Dendritic cell treated with granulocyte-macrophage colony-stimulating factor and Interleukin-4, amounts not matched to agents 40 ng/mL and 50 ng/mL, for 4 days (primary cell): ENCODE measurements at regions of chr5 and their contacts with region 1.

Region 1: DNA sequence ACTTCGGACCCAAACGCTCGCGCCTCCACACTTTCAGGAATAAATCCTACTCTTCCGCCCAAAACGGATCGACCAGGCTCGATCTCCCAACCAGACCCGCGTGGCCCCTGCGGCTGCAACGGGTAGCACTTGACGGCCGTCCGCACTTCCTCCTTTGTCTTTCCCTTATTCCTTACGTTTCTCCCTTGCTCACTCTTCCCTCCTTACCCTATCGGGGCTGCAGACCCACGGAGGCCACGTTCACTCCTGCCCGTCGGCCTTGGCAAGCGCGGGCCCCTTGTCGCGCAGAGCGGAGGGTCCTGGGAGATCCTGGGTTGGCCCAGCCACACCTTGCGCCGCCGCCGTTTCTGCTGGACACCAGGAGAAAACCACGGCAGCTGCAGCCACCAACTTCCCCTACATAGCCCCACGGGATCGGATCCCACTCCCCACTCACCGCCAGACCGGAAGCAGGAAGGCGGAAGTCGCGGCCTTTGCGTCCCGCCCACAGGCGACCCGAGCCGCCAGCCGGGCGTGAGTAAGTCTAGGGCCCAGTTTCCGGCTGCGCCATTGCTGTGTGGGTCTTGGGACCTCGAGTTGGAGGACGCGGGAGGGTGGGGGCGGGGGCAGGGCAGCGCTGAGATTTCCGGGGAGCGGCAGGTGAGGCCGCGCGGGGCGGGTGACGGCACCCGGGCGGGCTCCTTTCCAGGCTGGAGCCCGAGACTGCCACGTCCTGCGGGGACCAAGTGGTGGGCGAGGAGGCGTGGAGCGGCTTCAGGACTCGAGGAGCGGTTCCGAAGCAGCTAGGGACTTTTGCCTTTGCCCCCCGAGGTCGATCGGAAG is at the start of gene SMIM15:
- H3K4me3 Mint-ChIP-seq: peak within 1 kb of the TSS; percentile 84
- H3K27ac Mint-ChIP-seq: peak within 1 kb of the TSS; percentile 97
- H3K4me1 Mint-ChIP-seq: peaks cover 45% of the 10 kb centered on the region
- H3K27me3 Mint-ChIP-seq: no peaks in the 10 kb centered on the region

Region 2: DNA sequence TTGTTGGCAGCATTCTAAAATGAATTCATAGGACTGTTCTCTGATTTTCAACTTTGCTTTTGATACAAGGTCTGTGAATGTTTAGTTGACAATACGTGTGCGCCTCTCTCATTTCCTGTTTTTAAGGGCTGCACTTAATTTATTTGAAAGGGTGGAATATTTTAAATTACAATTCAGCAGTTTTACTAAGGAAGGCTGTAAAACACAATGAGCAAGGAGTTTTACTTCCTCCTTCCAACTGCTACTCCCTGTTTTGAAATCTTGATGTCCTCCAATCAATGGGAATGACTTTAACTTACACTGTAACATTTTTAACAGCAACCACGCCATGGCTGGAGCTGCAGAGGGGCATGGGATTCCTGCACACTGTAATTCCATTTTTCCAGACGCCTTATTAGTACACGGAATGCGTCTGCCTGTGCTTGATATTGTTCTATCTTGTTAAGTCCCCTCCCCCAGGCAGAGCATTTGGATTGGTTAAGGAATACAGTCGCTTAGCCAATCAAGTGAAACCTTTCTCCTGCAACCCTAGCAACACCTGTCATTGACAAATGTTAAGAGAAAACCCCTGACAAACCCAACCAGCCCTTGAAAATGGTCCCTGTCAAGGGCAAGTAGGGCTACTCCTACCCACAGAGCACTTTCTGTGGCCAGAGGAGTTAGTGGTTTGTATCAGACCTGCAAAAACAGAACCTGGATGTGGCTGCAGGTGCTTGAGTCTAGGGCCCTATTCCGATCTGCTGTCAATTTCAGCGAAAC is 157.3 kb after region 1 on chr5:
- intact Hi-C with region 1: loop called (anchors 1 kb)
- H3K4me3 Mint-ChIP-seq: peak overlapping the region; percentile 30
- H3K27ac Mint-ChIP-seq: peak overlapping the region; percentile 87
- H3K4me1 Mint-ChIP-seq: peaks cover 76% of the 10 kb centered on the region
- H3K27me3 Mint-ChIP-seq: no peaks in the 10 kb centered on the region

Region 3: DNA sequence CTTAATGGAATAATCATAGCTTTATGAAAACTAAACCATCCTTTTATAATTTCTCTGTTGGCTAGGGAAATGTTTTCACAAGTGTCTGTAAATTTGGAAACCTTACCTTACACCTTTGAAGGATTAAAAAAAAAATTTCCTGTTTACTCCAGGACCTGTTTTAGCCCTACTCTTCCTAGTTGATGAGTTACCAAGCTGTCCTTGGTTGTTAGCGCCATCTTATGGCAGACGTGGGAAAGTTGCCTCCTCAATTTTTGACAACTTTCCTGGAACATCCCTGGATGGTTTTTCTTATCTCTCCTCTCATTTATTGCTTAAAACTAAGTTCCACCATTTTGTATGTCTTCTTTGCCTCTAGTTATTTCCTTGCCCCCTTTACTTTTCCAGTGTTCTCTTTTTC is 195.5 kb after region 1 on chr5:
- intact Hi-C with region 1: no loop called
- H3K4me3 Mint-ChIP-seq: no peak overlapping the region
- H3K27ac Mint-ChIP-seq: no peak overlapping the region
- H3K4me1 Mint-ChIP-seq: peaks cover 40% of the 10 kb centered on the region
- H3K27me3 Mint-ChIP-seq: no peaks in the 10 kb centered on the region

Region 4: DNA sequence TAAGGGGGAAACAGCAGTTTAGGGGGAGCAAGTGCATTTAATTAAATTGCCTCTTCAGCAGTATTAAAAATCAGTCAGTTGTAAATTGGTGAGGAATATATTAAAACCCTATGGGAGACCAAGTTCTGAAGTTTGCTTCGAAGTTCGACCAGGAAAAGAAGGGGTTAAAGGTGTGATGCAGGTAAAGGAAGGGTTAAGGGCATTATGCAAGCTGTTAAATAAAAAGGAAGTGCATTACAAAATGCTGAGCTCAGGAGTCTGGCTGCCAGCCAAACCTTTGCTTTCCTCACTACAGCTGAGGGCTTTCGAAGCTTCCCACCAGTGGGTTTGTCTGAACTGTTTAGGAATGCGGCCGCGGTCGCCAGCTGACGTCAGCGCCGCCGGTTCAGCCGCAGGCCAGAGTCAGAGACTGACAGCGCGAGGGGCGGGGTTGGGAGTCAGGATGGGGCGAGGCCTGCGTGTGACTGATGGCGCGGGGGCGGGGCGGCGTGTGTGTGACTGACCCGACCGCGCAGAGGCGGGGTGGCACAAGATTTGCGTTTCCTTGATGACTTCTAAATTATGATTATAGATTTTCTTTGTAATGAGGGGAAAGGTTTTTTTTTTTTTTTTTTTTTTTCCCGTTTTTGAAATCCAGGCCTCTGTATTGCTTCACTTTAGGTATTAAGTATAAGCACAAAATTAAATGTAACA is 246.4 kb after region 1 on chr5:
- intact Hi-C with region 1: loop called (anchors 2 kb)
- H3K4me3 Mint-ChIP-seq: peak overlapping the region; percentile 56
- H3K27ac Mint-ChIP-seq: peak overlapping the region; percentile 60
- H3K4me1 Mint-ChIP-seq: peaks cover 48% of the 10 kb centered on the region
- H3K27me3 Mint-ChIP-seq: no peaks in the 10 kb centered on the region